HepG2 (cell line): ENCODE measurements at regions of chr12 and their contacts with region 1.

Region 1: GRCh38 chr12:1690578-1691122 is at the start of gene ADIPOR2:
- DNase-seq: peak; percentile 90
- ATAC-seq: peak; percentile 99
- H3K4me3 ChIP-seq: peak within 1 kb of the TSS; percentile 92 to 100 (median 94)
- H3K27ac ChIP-seq: peak within 1 kb of the TSS; percentile 92
- H3K4me1 ChIP-seq: peaks cover 42% of the 10 kb centered on the region
- H3K27me3 ChIP-seq: no peaks in the 10 kb centered on the region
- CTCF ChIP-seq: no peak
- EP300 ChIP-seq: peak; percentile 28 to 35; a peak in 2 of 4 replicates
- POLR2A ChIP-seq: peak; percentile 78 to 90
- RAD21 ChIP-seq: no peak
- total RNA-seq, gene ADIPOR2: 35.2 and 40.8 TPM in 2 replicates

Region 2: GRCh38 chr12:1650260-1650977 is 40.2 kb before region 1 on chr12:
- CTCF ChIA-PET with region 1: no interaction called
- POLR2A ChIA-PET with region 1: interaction called, 5 read pairs
- in situ Hi-C with region 1: no loop called
- intact Hi-C with region 1: loop called (anchors 5 kb)
- DNase-seq: no peak
- ATAC-seq: no peak
- H3K4me3 ChIP-seq: no peak overlapping the region
- H3K27ac ChIP-seq: no peak overlapping the region
- H3K4me1 ChIP-seq: peaks cover 46% of the 10 kb centered on the region
- H3K27me3 ChIP-seq: peaks cover 0 to 45% of the 10 kb centered on the region in 2 experiments; a peak in 3 of 5 replicates
- CTCF ChIP-seq: no peak
- EP300 ChIP-seq: no peak
- POLR2A ChIP-seq: no peak
- RAD21 ChIP-seq: no peak

Region 3: GRCh38 chr12:1661553-1662335 is 28.9 kb before region 1 on chr12:
- CTCF ChIA-PET with region 1: no interaction called
- POLR2A ChIA-PET with region 1: interaction called, 37 read pairs
- in situ Hi-C with region 1: no loop called
- intact Hi-C with region 1: no loop called
- DNase-seq: peak; percentile 81
- ATAC-seq: peak; percentile 91
- H3K4me3 ChIP-seq: peak overlapping the region; percentile 50 to 73 (median 56); a peak in 4 of 6 replicates
- H3K27ac ChIP-seq: peak overlapping the region; percentile 69
- H3K4me1 ChIP-seq: peaks cover 54% of the 10 kb centered on the region
- H3K27me3 ChIP-seq: no peaks in the 10 kb centered on the region
- CTCF ChIP-seq: peak; percentile 21; the same call in 1 of the 2 replicates
- EP300 ChIP-seq: peak in 1 of 2 experiments; percentile 25; a peak in 2 of 4 replicates
- POLR2A ChIP-seq: peak; percentile 64 to 92
- RAD21 ChIP-seq: peak; percentile 43; the same call in 1 of the 2 replicates

Region 4: DNA sequence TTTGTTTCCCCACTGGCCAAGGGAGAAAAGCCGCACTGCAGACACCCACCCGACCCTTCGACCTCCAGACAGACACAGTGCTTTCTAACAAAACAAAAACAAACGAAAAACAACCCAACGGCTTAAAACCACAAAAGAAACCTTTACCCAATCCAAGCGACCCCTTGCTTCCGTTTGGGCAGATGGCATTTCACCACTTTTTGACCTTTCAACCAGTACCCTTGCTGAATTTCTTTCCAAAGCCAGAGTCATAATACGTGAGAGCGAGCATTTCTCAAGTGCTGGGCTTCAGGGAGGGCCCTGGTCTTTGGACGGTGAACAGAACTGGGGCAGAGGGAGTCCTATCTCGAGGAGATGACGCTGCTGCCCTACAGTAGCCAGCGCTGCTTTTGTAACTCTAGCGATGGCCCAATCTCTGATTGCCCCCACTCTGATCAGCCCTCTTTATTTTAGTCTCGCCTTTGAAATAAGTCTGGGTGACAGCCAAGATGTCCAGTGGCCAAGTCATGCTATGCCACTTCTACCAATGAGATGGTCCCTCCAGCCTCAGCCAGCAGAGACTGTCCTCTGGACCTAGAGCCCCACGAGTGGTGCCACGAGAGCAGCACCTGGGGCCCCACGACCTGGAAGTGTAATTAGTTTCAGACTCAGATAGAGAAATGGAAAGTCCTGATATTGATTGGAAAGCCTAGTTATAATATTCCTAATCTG is 21.7 kb before region 1 on chr12:
- CTCF ChIA-PET with region 1: no interaction called
- POLR2A ChIA-PET with region 1: interaction called, 10 read pairs
- in situ Hi-C with region 1: no loop called
- intact Hi-C with region 1: no loop called
- DNase-seq: peak; percentile 85
- ATAC-seq: peak; percentile 89
- H3K4me3 ChIP-seq: peak overlapping the region; percentile 22 to 54 (median 26); a peak in 5 of 6 replicates
- H3K27ac ChIP-seq: peak overlapping the region; percentile 74
- H3K4me1 ChIP-seq: peaks cover 69% of the 10 kb centered on the region
- H3K27me3 ChIP-seq: no peaks in the 10 kb centered on the region
- CTCF ChIP-seq: peak; percentile 9; the same call in 1 of the 2 replicates
- EP300 ChIP-seq: peak in 1 of 2 experiments; percentile 81; a peak in 2 of 4 replicates
- POLR2A ChIP-seq: peak in 1 of 2 experiments; percentile 30; a peak in 1 of 4 replicates
- RAD21 ChIP-seq: no peak

Region 5: DNA sequence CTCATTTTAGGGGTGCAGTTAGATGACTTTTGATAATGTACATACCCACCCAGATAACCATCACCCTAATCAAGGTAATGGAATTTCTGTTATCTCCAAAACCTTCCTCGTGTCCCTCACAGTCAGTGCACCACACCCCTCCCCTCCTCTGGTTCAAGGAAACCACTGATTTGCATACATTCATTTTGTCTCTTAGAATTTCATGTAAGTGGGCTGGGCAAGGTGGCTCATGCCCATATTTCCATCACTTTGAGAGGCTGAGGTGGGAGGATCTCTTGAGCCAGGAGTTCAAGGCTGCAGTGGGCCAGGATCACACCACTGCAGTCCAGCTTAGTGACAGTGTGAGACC is 16.0 kb after region 1 on chr12:
- CTCF ChIA-PET with region 1: interaction called, 3 read pairs
- POLR2A ChIA-PET with region 1: interaction called, 5 read pairs
- in situ Hi-C with region 1: no loop called
- intact Hi-C with region 1: loop called (anchors 2 kb)
- DNase-seq: no peak
- ATAC-seq: no peak
- H3K4me3 ChIP-seq: no peak overlapping the region
- H3K27ac ChIP-seq: no peak overlapping the region
- H3K4me1 ChIP-seq: peaks cover 80% of the 10 kb centered on the region
- H3K27me3 ChIP-seq: no peaks in the 10 kb centered on the region
- CTCF ChIP-seq: no peak
- EP300 ChIP-seq: no peak
- POLR2A ChIP-seq: no peak
- RAD21 ChIP-seq: no peak

Region 6: DNA sequence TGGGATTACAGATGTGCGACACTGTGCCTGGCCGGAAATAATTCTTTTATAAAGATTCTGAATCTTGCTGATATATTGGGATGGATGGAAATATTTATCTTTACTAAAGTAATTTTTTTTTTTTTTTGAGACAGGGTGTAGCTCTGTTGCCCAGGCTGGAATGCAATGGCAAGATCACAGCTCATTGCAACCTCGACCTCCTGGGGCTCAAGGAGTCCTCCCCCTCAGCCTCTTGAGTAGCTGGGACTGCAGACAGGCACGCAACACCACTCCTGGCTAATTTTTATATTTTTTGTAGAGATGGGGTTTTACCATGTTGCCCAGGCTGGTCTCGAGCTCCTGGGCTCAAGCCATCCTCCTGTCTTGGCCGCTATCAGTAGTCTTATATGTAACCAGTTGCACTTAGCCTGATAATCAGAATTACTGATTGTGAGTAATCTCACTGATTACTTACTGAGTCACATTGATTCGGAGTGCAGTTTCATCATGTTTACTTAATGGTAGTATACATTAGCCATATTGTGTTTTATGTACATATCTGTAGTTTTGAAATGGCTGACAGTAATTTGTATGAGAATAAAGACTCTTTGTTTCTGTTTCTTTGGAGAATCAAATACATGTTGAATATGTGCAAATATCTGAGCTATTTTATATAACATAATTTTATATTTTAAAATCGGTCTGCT is 79.3 kb after region 1 on chr12:
- CTCF ChIA-PET with region 1: no interaction called
- POLR2A ChIA-PET with region 1: interaction called, 6 read pairs
- in situ Hi-C with region 1: no loop called
- intact Hi-C with region 1: loop called (anchors 5 kb)
- DNase-seq: peak; percentile 43
- ATAC-seq: no peak
- H3K4me3 ChIP-seq: no peak overlapping the region
- H3K27ac ChIP-seq: no peak overlapping the region
- H3K4me1 ChIP-seq: peaks cover 63% of the 10 kb centered on the region
- H3K27me3 ChIP-seq: no peaks in the 10 kb centered on the region
- CTCF ChIP-seq: no peak
- EP300 ChIP-seq: no peak
- POLR2A ChIP-seq: no peak
- RAD21 ChIP-seq: no peak

Region 7: DNA sequence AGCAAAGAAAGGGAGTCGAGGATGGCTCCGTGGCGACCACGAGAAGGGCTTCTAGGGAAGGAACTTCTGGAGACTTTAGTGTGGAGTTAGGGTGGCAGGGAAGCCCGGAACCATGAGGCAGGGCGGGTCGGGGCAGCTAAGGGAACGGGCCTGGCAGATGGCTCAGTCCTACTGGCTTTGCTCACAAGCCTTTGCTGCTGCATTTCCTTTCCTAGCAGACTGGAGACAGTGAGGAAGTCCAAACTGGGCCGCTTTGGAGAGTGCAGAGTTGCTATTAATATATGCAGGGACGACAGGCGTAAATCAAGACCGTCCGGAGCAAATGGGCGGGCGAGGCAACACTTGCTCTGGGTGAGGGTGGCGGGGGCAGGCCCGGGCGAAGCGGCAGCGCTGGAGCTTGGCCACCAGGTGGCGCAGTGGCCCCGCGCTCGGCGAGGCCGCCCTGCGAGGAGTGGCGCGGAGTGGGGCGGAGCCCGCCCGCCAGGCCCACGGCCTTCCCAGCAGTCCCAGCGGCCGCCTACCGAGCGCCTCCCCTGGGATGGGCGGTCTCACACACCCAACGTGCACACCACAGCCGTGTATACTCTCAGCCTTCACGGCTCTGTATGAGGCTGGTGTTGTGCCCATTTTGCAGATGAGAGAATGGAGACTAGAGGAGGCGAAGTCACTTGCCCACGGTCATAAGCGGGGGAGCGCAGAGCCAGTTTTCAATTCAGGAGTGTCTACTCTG is 105.3 kb after region 1 on chr12:
- CTCF ChIA-PET with region 1: no interaction called
- POLR2A ChIA-PET with region 1: interaction called, 3 read pairs
- in situ Hi-C with region 1: no loop called
- intact Hi-C with region 1: loop called (anchors 5 kb)
- DNase-seq: peak; percentile 56
- ATAC-seq: peak; percentile 83
- H3K4me3 ChIP-seq: peak overlapping the region in 2 of 3 experiments; percentile 16 to 56; a peak in 2 of 6 replicates
- H3K27ac ChIP-seq: no peak overlapping the region
- H3K4me1 ChIP-seq: peaks cover 19% of the 10 kb centered on the region; the same call in 1 of the 2 replicates
- H3K27me3 ChIP-seq: no peaks in the 10 kb centered on the region
- CTCF ChIP-seq: peak; percentile 91
- EP300 ChIP-seq: no peak
- POLR2A ChIP-seq: peak in 1 of 2 experiments; percentile 59; a peak in 2 of 4 replicates
- RAD21 ChIP-seq: peak; percentile 100